CD14-positive monocyte (primary cell): ENCODE measurements at regions of chr14 and their contacts with region 1.

Region 1: GRCh38 chr14:31559939-31560338 is 1.3 kb upstream of the NUBPL start:
- DNase-seq: no peak
- H3K4me3 ChIP-seq: peak overlapping the region in 1 of 3 experiments; percentile 90
- H3K4me3 Mint-ChIP-seq: peak overlapping the region in 1 of 2 donors; percentile 51
- H3K27ac ChIP-seq: no peak overlapping the region
- H3K27ac Mint-ChIP-seq: peak overlapping the region in 4 of 7 donors; percentile 28 to 96 (median 61)
- H3K4me1 ChIP-seq: peaks cover 9 to 12% of the 10 kb centered on the region in 2 donors
- H3K4me1 Mint-ChIP-seq: peaks cover 14% of the 10 kb centered on the region
- H3K27me3 ChIP-seq: peaks cover 6 to 8% of the 10 kb centered on the region in 2 donors
- H3K27me3 Mint-ChIP-seq: peaks cover 0 to 11% (median 2%) of the 10 kb centered on the region in 3 donors
- CTCF ChIP-seq: no peak

Region 2: DNA sequence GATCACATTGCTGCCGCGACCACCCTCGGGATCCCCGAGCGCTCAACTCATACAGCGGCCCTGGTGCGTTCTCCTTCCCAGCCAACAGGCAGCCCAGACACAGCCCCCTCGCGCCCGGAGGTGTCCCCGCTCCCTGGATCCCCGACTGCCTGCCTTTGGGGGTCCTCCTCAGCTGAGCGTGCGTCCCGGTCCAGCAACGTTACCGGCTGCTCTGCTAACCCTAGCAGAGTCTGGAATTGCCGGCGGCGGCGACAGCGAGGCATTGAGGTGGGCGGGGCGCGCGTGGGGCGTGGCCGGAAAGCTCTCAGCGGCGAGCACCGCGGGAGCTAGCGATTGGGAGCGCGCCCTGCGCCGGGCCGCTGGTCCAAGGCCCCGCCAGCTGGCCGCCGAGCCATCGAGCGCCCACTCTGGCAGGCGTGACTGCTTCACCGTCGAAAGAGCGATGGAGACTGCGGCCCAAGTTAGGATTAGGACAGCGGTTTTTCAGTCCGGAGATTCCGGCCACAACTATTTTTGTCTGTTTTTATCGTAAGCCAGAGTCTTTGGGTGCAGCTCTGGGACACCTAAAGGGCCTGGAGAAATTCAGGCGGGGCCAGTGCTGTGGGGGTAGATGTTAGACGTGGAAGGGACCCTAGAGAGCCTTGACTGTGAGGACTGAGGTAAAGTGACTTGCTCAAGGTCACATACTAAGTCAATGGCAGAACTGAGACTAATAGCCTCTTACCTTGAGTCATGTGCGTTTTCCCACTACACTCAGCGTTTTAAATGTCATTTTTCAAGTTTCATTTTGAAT is 139.4 kb before region 1 on chr14 and contains the start of gene HEATR5A:
- intact Hi-C with region 1: loop called in 1 of 2 experiments (anchors 10 kb)
- DNase-seq: peak; percentile 87 to 91 (median 90)
- H3K4me3 ChIP-seq: peak within 1 kb of the TSS; percentile 77 to 100 (median 99)
- H3K4me3 Mint-ChIP-seq: peak within 1 kb of the TSS; percentile 98
- H3K27ac ChIP-seq: peak within 1 kb of the TSS; percentile 78 to 94
- H3K27ac Mint-ChIP-seq: peak within 1 kb of the TSS; percentile 86 to 96 (median 94)
- H3K4me1 ChIP-seq: peaks cover 18 to 26% of the 10 kb centered on the region in 2 donors
- H3K4me1 Mint-ChIP-seq: peaks cover 26% of the 10 kb centered on the region
- H3K27me3 ChIP-seq: no peaks in the 10 kb centered on the region
- H3K27me3 Mint-ChIP-seq: peaks cover 0 to 1% (median 0%) of the 10 kb centered on the region in 3 donors
- CTCF ChIP-seq: no peak
- polyA plus RNA-seq, gene HEATR5A: 13.1 to 21.0 (median 16.8) TPM

Region 3: GRCh38 chr14:31611778-31612433 is 52.0 kb after region 1 on chr14:
- intact Hi-C with region 1: no loop called
- DNase-seq: no peak
- H3K4me3 ChIP-seq: no peak overlapping the region
- H3K4me3 Mint-ChIP-seq: no peak overlapping the region
- H3K27ac ChIP-seq: no peak overlapping the region
- H3K27ac Mint-ChIP-seq: no peak overlapping the region
- H3K4me1 ChIP-seq: no peaks in the 10 kb centered on the region
- H3K4me1 Mint-ChIP-seq: no peaks in the 10 kb centered on the region
- H3K27me3 ChIP-seq: no peaks in the 10 kb centered on the region
- H3K27me3 Mint-ChIP-seq: peaks cover 0 to 1% (median 0%) of the 10 kb centered on the region in 3 donors
- CTCF ChIP-seq: no peak

Region 4: DNA sequence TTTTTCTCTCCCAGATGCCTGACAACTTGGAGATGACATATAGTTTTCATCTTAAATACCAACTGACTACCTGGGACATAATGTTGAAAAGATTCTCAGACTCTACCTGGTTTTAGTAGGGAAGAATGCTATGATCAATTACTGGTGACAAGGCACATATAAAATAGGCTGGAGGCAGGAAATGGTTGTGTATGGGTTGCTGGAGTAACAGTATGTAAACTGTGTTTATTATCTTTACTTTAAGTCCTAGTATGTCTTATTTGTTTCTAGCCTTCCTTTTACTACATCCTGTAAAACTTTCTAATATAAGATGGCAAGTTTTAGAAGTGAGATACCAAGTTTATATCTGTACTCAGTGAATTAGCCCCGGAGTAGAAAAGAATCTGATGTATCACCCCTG is 99.3 kb after region 1 on chr14:
- intact Hi-C with region 1: no loop called
- DNase-seq: no peak
- H3K4me3 ChIP-seq: no peak overlapping the region
- H3K4me3 Mint-ChIP-seq: no peak overlapping the region
- H3K27ac ChIP-seq: no peak overlapping the region
- H3K27ac Mint-ChIP-seq: no peak overlapping the region
- H3K4me1 ChIP-seq: no peaks in the 10 kb centered on the region
- H3K4me1 Mint-ChIP-seq: no peaks in the 10 kb centered on the region
- H3K27me3 ChIP-seq: no peaks in the 10 kb centered on the region
- H3K27me3 Mint-ChIP-seq: no peaks in the 10 kb centered on the region
- CTCF ChIP-seq: no peak

Region 5: GRCh38 chr14:31834616-31835015 is 274.7 kb after region 1 on chr14:
- intact Hi-C with region 1: no loop called
- DNase-seq: no peak
- H3K4me3 ChIP-seq: no peak overlapping the region
- H3K4me3 Mint-ChIP-seq: no peak overlapping the region
- H3K27ac ChIP-seq: no peak overlapping the region
- H3K27ac Mint-ChIP-seq: peak overlapping the region in 1 of 7 donors; percentile 12
- H3K4me1 ChIP-seq: no peaks in the 10 kb centered on the region
- H3K4me1 Mint-ChIP-seq: no peaks in the 10 kb centered on the region
- H3K27me3 ChIP-seq: no peaks in the 10 kb centered on the region
- H3K27me3 Mint-ChIP-seq: peaks cover 0 to 2% (median 0%) of the 10 kb centered on the region in 3 donors
- CTCF ChIP-seq: no peak

Region 6: GRCh38 chr14:31937721-31938346 is 377.9 kb after region 1 on chr14:
- intact Hi-C with region 1: no loop called
- DNase-seq: peak; percentile 6 to 64 (median 7)
- H3K4me3 ChIP-seq: no peak overlapping the region
- H3K4me3 Mint-ChIP-seq: no peak overlapping the region
- H3K27ac ChIP-seq: no peak overlapping the region
- H3K27ac Mint-ChIP-seq: no peak overlapping the region
- H3K4me1 ChIP-seq: no peaks in the 10 kb centered on the region
- H3K4me1 Mint-ChIP-seq: no peaks in the 10 kb centered on the region
- H3K27me3 ChIP-seq: no peaks in the 10 kb centered on the region
- H3K27me3 Mint-ChIP-seq: peaks cover 0 to 1% (median 0%) of the 10 kb centered on the region in 3 donors
- CTCF ChIP-seq: no peak